Posterior vena cava (tissue), 2 donors: ENCODE measurements at regions of chr2 and their contacts with region 1.

Region 1: GRCh38 chr2:23384551-23385349 is at the start of gene KLHL29:
- DNase-seq: peak; percentile 95
- total RNA-seq, gene KLHL29: 9.9 to 10.6 TPM

Region 2: GRCh38 chr2:22826703-22827102 is 558.0 kb before region 1 on chr2:
- intact Hi-C with region 1: no loop called
- DNase-seq: no peak

Region 3: DNA sequence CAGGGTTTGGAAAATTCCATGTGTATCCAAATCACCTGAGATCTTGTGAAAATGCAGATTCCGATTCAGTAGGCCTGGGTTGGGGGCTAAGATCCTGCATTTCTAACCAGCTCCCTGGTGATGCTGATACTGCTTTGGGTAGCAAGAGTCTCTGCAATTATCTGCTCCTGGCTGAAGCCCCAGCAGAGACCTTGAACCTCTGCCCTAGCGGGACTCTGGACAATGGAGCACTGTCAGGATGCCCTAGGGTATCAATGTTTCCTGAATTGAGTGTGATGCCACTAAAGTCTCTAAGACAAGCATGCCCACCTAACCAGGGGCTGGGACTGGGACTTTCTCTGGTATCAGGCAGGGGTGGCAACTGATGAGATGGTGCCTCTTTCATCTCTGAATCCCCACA is 49.2 kb before region 1 on chr2:
- intact Hi-C with region 1: no loop called
- DNase-seq: no peak

Region 4: DNA sequence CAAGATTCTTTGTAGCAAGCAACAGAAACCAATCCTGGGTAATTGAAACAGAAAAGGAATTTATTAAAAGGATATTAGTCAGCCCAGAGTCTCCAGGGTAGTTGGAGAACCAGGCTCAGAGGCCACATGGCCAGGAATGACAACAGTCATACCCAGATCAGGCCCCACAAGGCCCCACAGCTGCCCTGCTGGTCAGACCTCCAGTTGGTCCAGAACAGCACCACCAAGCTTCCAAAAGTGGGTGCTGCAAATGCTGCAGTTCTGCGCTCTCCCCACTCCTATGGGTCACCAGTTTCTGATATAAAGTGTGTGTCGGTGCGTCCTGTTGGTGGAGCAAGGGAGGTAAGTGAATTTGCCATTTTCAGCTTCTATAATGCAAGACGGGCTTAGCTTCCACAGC is 30.1 kb after region 1 on chr2:
- intact Hi-C with region 1: loop called in 1 of 2 experiments (anchors 1 kb)
- DNase-seq: no peak